SK-N-SH (cell line): ENCODE measurements at regions of chr5 and their contacts with region 1.

Region 1: DNA sequence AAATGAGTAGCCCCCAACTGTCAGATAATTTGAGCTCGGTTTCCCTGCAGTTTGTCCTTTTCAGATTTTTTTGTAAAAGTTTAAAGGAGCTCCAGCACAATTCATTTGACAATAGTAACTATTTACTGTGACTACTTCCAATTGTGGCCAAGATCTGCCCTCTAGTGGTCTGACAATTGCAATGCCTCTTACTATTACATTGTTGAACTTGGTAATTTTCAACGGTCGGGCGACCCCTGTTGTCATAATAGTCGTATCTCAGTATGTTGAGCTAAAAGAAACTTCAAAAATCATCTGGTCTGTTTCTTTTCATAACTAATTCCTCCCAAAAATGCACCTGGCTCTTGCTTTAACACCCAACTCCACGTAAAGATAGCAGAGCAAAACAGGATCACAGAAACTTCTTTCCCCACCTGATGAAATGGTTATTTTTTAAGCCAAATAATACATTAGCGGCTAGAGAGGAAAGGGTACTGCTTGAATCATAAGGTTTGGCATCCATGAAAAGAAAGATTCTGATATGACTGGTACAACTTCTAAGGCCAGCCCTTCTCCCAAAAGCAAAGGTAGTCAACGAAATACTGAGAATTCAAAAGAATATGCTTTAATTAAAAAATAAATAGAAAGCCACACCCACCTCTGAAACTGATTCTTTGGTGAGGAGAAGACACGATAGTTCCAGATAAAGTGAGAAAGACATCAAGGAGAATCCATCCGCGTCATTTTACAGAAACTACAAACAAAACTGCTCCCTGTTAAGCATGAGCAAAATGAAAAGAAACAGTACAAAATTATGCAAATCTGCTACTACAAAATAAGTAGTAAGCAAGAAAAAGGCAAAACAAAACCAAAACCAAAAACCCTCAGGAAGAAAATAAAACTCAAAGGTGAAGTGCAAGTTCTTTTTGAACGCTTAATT is 76.9 kb upstream of the HTR4 start:
- DNase-seq: peak; percentile 52
- H3K4me3 ChIP-seq: no peak overlapping the region; a peak in 1 of 4 replicates
- H3K27ac ChIP-seq: peak overlapping the region in 1 of 2 experiments; percentile 56; a peak in 2 of 4 replicates
- H3K4me1 ChIP-seq: peaks cover 0 to 15% of the 10 kb centered on the region in 2 experiments; a peak in 3 of 4 replicates
- H3K27me3 ChIP-seq: no peaks in the 10 kb centered on the region
- CTCF ChIP-seq: peak; percentile 99
- EP300 ChIP-seq: no peak
- RAD21 ChIP-seq: peak; percentile 99

Region 2: DNA sequence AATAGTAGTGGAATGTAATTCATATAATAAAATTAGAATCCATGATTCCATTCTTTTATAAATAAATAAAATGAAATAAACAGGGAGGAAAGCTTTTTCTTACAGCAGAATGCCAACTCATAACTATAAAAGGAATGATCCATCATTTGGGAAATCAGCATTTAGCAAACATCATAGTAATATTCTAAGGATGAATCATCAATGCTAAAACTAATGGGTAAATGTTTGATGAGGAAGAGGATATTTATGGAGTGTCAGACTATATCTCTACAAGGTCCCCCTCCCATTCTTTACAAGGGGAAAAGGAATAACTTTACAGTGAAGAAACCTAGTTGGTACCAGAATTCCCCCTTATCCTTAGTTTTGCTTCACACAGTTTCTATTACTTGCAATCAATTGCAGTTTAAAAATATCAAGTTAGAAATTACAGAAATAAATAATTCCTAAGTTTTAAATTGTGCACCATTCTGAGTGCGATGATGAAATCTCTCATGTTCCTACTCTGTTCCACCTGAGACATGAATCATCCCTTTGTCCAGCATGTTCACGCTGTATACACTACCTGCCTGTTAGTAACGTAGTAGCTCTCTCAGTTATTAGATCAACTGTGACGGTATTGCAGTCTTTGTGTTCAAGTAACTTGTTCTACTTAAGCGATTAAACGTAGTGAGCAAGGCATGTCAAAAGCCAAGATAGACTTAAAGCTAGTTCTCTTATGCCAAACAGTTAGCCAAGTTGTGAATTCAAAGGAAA is 934.5 kb before region 1 on chr5:
- CTCF ChIA-PET with region 1: no interaction called
- POLR2A ChIA-PET with region 1: no interaction called
- DNase-seq: no peak
- H3K4me3 ChIP-seq: no peak overlapping the region
- H3K27ac ChIP-seq: no peak overlapping the region
- H3K4me1 ChIP-seq: no peaks in the 10 kb centered on the region
- H3K27me3 ChIP-seq: no peaks in the 10 kb centered on the region
- CTCF ChIP-seq: no peak
- EP300 ChIP-seq: no peak
- RAD21 ChIP-seq: no peak

Region 3: GRCh38 chr5:148179234-148179824 is 551.9 kb before region 1 on chr5:
- CTCF ChIA-PET with region 1: interaction called, 45 read pairs
- POLR2A ChIA-PET with region 1: no interaction called
- DNase-seq: peak; percentile 12
- H3K4me3 ChIP-seq: no peak overlapping the region
- H3K27ac ChIP-seq: no peak overlapping the region
- H3K4me1 ChIP-seq: no peaks in the 10 kb centered on the region
- H3K27me3 ChIP-seq: no peaks in the 10 kb centered on the region
- CTCF ChIP-seq: peak; percentile 82
- EP300 ChIP-seq: no peak
- RAD21 ChIP-seq: peak; percentile 91

Region 4: DNA sequence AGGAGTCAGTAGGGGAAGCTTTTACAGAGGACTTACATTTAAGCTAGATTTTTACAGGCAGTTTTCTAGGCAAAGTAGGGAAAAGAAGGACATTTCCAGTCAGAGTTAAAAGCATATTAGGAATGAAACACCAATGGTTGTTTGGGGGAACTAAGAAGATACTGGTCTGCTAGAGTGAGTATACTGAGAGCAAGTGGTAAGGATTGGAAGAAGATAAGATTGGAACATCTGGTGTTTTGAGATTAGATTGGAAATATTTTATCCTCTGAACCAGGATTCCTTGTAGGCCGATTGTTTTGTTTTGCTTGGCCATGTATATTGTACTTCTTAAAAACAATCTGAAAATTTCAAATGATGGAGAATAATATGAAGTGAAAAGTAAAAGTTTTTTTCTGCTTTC is 339.8 kb before region 1 on chr5:
- CTCF ChIA-PET with region 1: interaction called, 10 read pairs
- POLR2A ChIA-PET with region 1: no interaction called
- DNase-seq: peak; percentile 23
- H3K4me3 ChIP-seq: no peak overlapping the region
- H3K27ac ChIP-seq: peak overlapping the region in 1 of 2 experiments; percentile 72; a peak in 2 of 4 replicates
- H3K4me1 ChIP-seq: peaks cover 0 to 2% of the 10 kb centered on the region in 2 experiments; a peak in 1 of 4 replicates
- H3K27me3 ChIP-seq: no peaks in the 10 kb centered on the region
- CTCF ChIP-seq: no peak
- EP300 ChIP-seq: no peak
- RAD21 ChIP-seq: no peak

Region 5: GRCh38 chr5:148482691-148483462 is 248.3 kb before region 1 on chr5:
- CTCF ChIA-PET with region 1: interaction called, 14 read pairs
- POLR2A ChIA-PET with region 1: no interaction called
- DNase-seq: peak; percentile 25
- H3K4me3 ChIP-seq: no peak overlapping the region
- H3K27ac ChIP-seq: no peak overlapping the region
- H3K4me1 ChIP-seq: no peaks in the 10 kb centered on the region
- H3K27me3 ChIP-seq: no peaks in the 10 kb centered on the region
- CTCF ChIP-seq: peak; percentile 65
- EP300 ChIP-seq: no peak
- RAD21 ChIP-seq: no peak

Region 6: DNA sequence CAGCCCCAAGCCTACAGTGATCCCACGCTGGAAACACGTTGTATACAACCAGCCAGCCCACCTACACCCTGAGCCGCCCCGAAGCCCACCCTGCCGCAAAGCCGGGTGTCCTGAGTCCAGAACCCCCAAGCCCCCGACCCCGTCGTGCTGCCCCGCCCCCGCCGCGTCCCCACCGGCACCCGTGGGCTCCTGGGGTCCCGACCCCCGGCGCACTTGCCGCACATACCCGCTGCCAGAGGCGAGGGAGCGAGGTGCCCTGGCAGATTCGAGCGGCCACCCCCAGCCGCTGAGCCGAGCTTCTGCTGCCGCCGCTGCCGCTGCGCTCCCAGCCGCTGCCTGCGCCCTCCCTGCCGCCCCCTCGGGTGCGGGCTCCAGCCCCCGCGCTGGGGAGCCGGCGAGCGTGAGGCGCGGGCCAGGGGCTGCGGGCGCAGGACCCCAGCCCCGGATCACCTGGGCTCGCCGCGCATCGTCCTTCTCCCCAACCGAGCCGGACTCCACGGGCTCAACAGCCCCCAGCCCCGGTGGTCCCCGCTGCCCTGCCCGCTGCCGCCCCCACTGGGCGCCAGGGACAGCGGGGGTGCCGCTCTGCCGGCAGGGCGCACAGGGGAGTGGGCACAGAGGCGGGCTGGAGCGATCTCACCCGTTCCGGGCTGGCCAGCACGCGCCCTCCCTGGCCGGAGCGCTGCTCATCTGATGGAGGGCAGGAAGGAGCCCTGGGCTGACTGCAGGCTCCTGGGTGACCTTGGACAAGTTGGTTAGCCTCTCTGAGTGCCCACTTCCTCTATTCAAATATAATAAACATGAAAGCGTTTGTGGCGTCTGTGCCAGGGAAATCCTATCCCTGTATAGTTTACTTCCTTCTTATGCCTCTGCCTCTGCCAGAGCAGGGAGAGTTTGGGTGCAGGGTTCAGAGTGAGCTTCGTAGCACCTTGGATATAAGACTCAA is 77.1 kb before region 1 on chr5 and contains the start of gene HTR4:
- CTCF ChIA-PET with region 1: interaction called, 15 read pairs
- POLR2A ChIA-PET with region 1: no interaction called
- DNase-seq: peak; percentile 77
- H3K4me3 ChIP-seq: peak within 1 kb of the TSS in 1 of 2 experiments; percentile 38; a peak in 2 of 4 replicates
- H3K27ac ChIP-seq: no peak within 1 kb of the TSS
- H3K4me1 ChIP-seq: peaks cover 0 to 2% of the 10 kb centered on the region in 2 experiments; a peak in 1 of 4 replicates
- H3K27me3 ChIP-seq: peaks cover 17% of the 10 kb centered on the region; the same call in 1 of the 2 replicates
- CTCF ChIP-seq: no peak
- EP300 ChIP-seq: no peak
- RAD21 ChIP-seq: no peak
- polyA plus RNA-seq, gene HTR4: not detected in 2 replicates

Region 7: DNA sequence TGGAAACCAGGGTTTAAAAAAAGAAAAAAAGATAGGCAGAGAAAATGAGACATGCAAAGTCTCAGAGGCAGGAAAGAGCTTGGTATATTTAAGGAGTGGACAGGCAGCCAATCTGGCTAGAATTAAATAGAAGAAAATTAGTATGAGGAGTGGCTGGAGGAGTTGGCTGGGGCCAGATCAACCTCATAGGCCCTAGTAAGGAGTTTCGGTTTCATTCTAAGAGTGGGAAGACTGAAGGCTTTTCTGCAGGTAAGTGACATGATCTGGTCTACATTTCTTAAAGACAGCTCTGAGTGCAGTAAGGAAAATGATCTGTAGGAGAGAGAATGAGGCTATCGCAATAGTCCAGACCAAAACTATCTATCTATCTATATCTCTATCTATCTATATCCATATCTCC is 122.7 kb after region 1 on chr5:
- CTCF ChIA-PET with region 1: no interaction called
- POLR2A ChIA-PET with region 1: no interaction called
- DNase-seq: no peak
- H3K4me3 ChIP-seq: no peak overlapping the region
- H3K27ac ChIP-seq: no peak overlapping the region
- H3K4me1 ChIP-seq: no peaks in the 10 kb centered on the region
- H3K27me3 ChIP-seq: no peaks in the 10 kb centered on the region
- CTCF ChIP-seq: no peak
- EP300 ChIP-seq: no peak
- RAD21 ChIP-seq: no peak

Region 8: GRCh38 chr5:148957591-148958202 is 226.5 kb after region 1 on chr5:
- CTCF ChIA-PET with region 1: interaction called, 29 read pairs
- POLR2A ChIA-PET with region 1: no interaction called
- DNase-seq: peak; percentile 59
- H3K4me3 ChIP-seq: no peak overlapping the region; a peak in 1 of 4 replicates
- H3K27ac ChIP-seq: no peak overlapping the region
- H3K4me1 ChIP-seq: peaks cover 0 to 3% of the 10 kb centered on the region in 2 experiments; a peak in 1 of 4 replicates
- H3K27me3 ChIP-seq: no peaks in the 10 kb centered on the region
- CTCF ChIP-seq: peak; percentile 90
- EP300 ChIP-seq: no peak
- RAD21 ChIP-seq: peak; percentile 78

Region 9: DNA sequence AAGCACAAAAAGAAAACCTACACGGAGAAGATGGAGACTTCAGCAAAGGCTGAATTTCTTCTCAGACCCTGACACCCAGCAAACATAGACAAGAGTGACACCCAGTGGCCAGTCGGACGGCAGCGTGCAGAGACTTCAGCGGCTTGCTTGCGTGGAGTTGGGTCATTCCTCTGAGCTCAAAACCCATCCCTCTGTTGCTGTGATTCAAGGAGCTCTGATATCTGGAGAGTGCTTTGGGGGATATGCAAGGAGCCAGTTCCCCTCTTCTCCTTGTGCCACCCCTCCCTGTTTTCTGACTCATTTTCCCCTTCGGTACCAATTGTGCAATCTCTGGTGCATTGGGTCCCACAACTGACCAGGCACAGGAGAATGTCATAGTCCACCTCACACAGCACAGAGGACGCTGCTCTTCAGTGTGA is 304.2 kb after region 1 on chr5:
- CTCF ChIA-PET with region 1: interaction called, 618 read pairs
- POLR2A ChIA-PET with region 1: interaction called, 3 read pairs
- DNase-seq: peak; percentile 67
- H3K4me3 ChIP-seq: no peak overlapping the region; a peak in 1 of 4 replicates
- H3K27ac ChIP-seq: no peak overlapping the region
- H3K4me1 ChIP-seq: peaks cover 0 to 6% of the 10 kb centered on the region in 2 experiments; a peak in 2 of 4 replicates
- H3K27me3 ChIP-seq: no peaks in the 10 kb centered on the region
- CTCF ChIP-seq: peak; percentile 95
- EP300 ChIP-seq: no peak
- RAD21 ChIP-seq: peak; percentile 97